ENCODE measurements at regions of chr1 and their contacts with region 1.

Region 1: GRCh38 chr1:187680823-187681222 is 852.1 kb downstream of the PLA2G4A start:
- DNase-seq: no peak
- ATAC-seq: no peak
- H3K4me3 ChIP-seq: no peak overlapping the region
- H3K27ac ChIP-seq: no peak overlapping the region
- H3K4me1 ChIP-seq: no peaks in the 10 kb centered on the region
- H3K27me3 ChIP-seq: no peaks in the 10 kb centered on the region
- CTCF ChIP-seq: no peak

Region 2: DNA sequence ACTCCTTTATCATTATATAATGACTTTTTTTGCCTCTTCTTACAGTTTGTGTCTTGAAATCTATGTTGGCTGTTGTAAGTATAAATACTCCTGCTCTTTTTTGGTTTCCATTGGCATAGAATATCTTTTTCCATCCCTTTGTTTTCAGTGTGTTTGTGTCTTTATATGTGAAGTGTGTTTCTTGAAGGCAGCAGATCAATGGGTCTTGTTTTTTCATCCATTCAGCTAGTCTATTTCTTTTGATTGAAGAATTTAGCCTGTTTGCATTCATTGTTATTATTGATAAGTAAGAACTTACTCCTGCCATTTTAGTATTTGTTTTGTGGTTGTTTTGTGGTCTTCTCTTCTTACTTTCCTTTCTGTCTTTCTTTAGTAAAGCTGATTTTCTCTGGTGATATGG is 529.3 kb before region 1 on chr1:
- intact Hi-C with region 1: no loop called
- DNase-seq: no peak
- ATAC-seq: no peak
- H3K4me3 ChIP-seq: no peak overlapping the region
- H3K27ac ChIP-seq: no peak overlapping the region
- H3K4me1 ChIP-seq: no peaks in the 10 kb centered on the region
- H3K27me3 ChIP-seq: no peaks in the 10 kb centered on the region
- CTCF ChIP-seq: no peak

Region 3: DNA sequence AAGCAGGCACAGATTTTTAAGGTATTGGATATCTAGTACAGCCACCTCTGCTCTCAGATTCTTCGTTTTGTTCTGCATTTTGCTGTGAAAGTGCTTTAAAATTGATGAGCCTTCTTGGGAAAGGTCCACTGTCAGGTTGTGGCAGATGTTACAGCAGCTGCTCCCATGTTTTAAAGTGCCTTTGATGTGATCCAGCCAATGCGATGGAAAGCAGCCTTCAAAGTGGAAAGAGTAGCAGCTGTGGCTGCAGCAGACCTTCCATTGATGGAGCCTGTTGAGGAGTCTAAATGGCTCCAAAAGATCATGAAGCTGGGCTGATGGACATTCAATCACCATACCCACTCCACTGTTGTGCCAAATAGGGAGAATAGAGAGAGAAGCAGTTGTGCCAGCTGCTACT is 35.2 kb before region 1 on chr1:
- intact Hi-C with region 1: no loop called
- DNase-seq: no peak
- ATAC-seq: no peak
- H3K4me3 ChIP-seq: no peak overlapping the region
- H3K27ac ChIP-seq: no peak overlapping the region
- H3K4me1 ChIP-seq: no peaks in the 10 kb centered on the region
- H3K27me3 ChIP-seq: no peaks in the 10 kb centered on the region
- CTCF ChIP-seq: no peak

Region 4: DNA sequence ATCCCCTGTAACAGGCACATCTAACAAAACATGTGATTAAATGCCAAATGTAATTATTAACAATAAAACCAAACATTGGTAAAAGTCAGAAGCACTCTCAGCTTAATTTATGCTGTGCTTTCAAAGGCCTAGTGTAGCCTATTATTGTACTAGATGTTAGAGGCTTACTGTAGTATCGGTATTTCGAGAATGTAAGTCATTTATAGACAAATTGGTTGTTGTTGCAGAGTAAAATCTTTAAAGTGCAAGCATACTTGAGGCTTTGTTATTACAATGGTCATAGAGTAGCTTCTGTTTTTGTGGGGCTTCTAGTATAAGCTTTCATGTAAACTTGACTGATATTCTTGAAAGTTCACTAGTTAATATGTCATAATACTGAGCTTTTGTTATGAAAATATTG is 113.7 kb after region 1 on chr1:
- intact Hi-C with region 1: loop called in 1 of 2 experiments (anchors 5 kb)
- DNase-seq: no peak
- ATAC-seq: no peak
- H3K4me3 ChIP-seq: no peak overlapping the region
- H3K27ac ChIP-seq: no peak overlapping the region
- H3K4me1 ChIP-seq: no peaks in the 10 kb centered on the region
- H3K27me3 ChIP-seq: no peaks in the 10 kb centered on the region
- CTCF ChIP-seq: no peak

Region 5: GRCh38 chr1:187817782-187818181 is 137.0 kb after region 1 on chr1:
- intact Hi-C with region 1: no loop called
- DNase-seq: no peak
- ATAC-seq: no peak
- H3K4me3 ChIP-seq: no peak overlapping the region
- H3K27ac ChIP-seq: no peak overlapping the region
- H3K4me1 ChIP-seq: no peaks in the 10 kb centered on the region
- H3K27me3 ChIP-seq: no peaks in the 10 kb centered on the region
- CTCF ChIP-seq: no peak

Region 6: GRCh38 chr1:188433425-188433824 is 752.6 kb after region 1 on chr1:
- intact Hi-C with region 1: no loop called
- DNase-seq: no peak
- ATAC-seq: no peak
- H3K4me3 ChIP-seq: no peak overlapping the region
- H3K27ac ChIP-seq: no peak overlapping the region
- H3K4me1 ChIP-seq: no peaks in the 10 kb centered on the region
- H3K27me3 ChIP-seq: no peaks in the 10 kb centered on the region
- CTCF ChIP-seq: no peak

Measured in psoas muscle (tissue), 8 donors.